Left cardiac atrium (tissue), 4 donors: ENCODE measurements at regions of chr17 and their contacts with region 1.

Region 1: GRCh38 chr17:57114085-57114673 is 29.1 kb downstream of the AKAP1 start:
- DNase-seq: peak; percentile 51
- ATAC-seq: peak in 1 of 2 donors; percentile 10

Region 2: DNA sequence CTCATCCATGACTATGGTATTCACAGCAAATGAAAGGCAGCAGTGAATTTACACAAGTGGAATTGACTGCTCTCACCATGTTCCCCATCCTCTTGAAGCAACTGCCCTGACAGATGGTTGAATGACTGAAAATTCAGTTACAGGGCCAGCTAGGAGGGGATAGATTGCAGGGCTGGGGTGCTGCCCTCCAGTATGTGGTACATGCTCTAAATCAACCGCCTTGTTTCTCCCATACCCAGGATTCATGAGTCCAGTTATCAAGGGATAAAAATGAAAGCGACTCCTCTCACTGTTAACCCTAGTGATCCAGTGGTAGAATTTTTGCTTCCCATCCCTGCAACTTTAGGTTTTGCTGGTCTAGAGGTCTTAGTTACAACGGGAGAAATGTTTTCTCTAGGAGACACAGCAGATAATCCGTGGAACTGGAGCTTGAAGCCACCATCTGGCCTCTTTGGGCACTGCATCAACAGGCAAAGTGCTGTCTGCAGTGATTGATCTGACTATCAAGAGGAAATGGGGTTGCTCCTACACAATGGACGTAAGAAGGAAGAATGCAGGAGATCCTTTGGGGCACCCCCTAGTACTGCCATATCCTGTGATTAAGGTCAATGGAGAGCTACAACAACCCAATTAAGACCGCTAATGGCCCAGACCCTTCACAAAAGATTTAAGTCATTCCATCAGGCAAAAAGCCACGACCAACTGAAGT is 104.3 kb before region 1 on chr17:
- intact Hi-C with region 1: loop called (anchors 5 to 10 kb)
- DNase-seq: peak; percentile 51
- ATAC-seq: peak; percentile 63 to 76

Region 3: GRCh38 chr17:57329380-57330214 is 215.4 kb after region 1 on chr17:
- intact Hi-C with region 1: no loop called
- DNase-seq: no peak
- ATAC-seq: peak; percentile 48 to 61